ENCODE measurements at regions of chr11 and their contacts with region 1.

Region 1: GRCh38 chr11:63710476-63711217 is 29.3 kb downstream of the RTN3 start:
- H3K4me3 ChIP-seq: no peak overlapping the region
- H3K27ac ChIP-seq: no peak overlapping the region
- H3K4me1 ChIP-seq: peaks cover 2% of the 10 kb centered on the region; the same call in 1 of the 2 replicates
- CTCF ChIP-seq: no peak

Region 2: DNA sequence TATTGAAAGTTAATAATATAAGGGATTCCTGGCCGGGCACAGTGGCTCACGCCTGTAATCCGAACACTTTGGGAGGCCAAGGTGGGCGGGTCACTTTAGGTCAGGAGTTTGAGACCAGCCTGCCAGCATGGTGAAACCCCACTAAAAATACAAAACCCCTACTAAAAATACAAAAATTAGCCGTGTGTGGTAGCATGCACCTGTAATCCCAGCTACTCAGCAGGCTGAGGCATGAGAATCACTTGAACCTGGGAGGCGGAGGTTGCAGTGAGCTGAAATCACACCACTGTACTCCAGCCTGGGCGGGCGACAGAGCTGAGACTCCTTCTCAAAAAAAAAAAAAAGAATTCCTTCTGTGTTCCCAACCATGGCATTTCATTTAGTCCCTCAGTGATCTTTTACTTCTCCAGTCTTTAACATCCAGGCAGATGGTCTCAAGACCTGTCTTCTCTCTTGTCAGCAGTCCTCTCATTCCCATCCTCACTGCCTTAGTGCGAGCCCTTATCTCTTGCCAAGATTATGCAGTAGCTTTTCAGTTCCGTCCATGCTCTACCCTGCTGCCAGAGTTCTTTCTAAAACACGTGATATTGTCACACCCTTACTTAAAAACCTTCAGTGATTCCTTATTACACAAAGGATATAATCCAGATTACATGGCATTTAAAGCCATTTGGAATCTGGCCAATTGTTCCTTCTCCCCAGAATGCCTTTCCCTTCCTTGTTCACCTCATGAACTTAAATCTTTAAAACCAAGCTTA is 11.5 kb before region 1 on chr11:
- CTCF ChIA-PET with region 1: interaction called, 11 read pairs
- POLR2A ChIA-PET with region 1: no interaction called
- H3K4me3 ChIP-seq: no peak overlapping the region
- H3K27ac ChIP-seq: no peak overlapping the region
- H3K4me1 ChIP-seq: no peaks in the 10 kb centered on the region; the same call in 1 of the 2 replicates
- CTCF ChIP-seq: no peak

Region 3: GRCh38 chr11:63729326-63729725 is 18.7 kb after region 1 on chr11:
- CTCF ChIA-PET with region 1: no interaction called
- POLR2A ChIA-PET with region 1: no interaction called
- H3K4me3 ChIP-seq: no peak overlapping the region
- H3K27ac ChIP-seq: no peak overlapping the region
- H3K4me1 ChIP-seq: no peaks in the 10 kb centered on the region
- CTCF ChIP-seq: no peak

Region 4: GRCh38 chr11:63866211-63866610 is 155.6 kb after region 1 on chr11:
- CTCF ChIA-PET with region 1: no interaction called
- POLR2A ChIA-PET with region 1: no interaction called
- H3K4me3 ChIP-seq: no peak overlapping the region
- H3K27ac ChIP-seq: no peak overlapping the region
- H3K4me1 ChIP-seq: peaks cover 20% of the 10 kb centered on the region
- CTCF ChIP-seq: no peak

Measured in HEK293 (cell line).